H1 (cell line): ENCODE measurements at regions of chr1 and their contacts with region 1.

Region 1: DNA sequence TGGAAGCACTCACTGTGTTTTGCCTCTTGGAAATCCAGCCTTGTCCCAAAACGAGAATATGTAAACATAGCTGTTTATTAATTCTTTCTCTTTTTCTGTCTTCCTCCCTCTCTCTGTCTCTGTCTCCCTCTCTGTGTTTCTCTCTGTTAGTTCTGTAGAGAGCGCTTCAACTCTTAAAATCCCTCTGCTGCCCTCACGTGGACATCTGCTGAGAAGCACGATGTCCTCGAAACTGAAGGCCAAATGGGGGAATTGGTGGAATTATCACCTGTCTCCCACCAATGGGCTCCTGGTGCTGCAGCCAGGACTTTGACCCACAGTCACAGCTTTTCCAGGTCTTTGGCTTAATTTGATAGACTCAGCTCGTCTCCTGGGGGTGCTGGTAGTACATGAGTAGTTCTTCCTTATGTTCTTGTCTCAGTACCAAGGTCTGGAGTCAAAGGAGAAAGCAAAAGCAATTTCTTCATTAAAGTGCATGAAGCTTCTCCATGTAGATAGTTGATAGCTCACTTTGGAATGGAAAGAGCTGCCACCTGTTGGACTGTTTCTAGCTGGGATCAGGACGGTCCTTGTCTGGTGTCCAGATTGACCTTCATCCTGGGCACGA is 5.5 kb upstream of the GBP6 start:
- DNase-seq: peak; percentile 23 to 86
- H3K4me3 ChIP-seq: no peak overlapping the region
- H3K27ac ChIP-seq: no peak overlapping the region
- H3K4me1 ChIP-seq: 0 out of 7 replicates have a peak, but pooled peaks cover 0 to 2% (median 0%) of the 10 kb centered on the region in 4 experiments
- H3K27me3 ChIP-seq: no peaks in the 10 kb centered on the region
- CTCF ChIP-seq: peak; percentile 53 to 87 (median 87)
- EP300 ChIP-seq: no peak
- POLR2A ChIP-seq: no peak
- RAD21 ChIP-seq: peak; percentile 90 to 91

Region 2: GRCh38 chr1:89085781-89086180 is 272.6 kb before region 1 on chr1:
- CTCF ChIA-PET with region 1: interaction called, 13 read pairs
- POLR2A ChIA-PET with region 1: no interaction called
- DNase-seq: no peak
- H3K4me3 ChIP-seq: no peak overlapping the region
- H3K27ac ChIP-seq: no peak overlapping the region
- H3K4me1 ChIP-seq: 0 out of 7 replicates have a peak, but pooled peaks cover 0 to 3% (median 0%) of the 10 kb centered on the region in 4 experiments
- H3K27me3 ChIP-seq: no peaks in the 10 kb centered on the region
- CTCF ChIP-seq: peak in 2 of 3 experiments; percentile 60 to 65; a peak in 3 of 4 replicates
- EP300 ChIP-seq: no peak
- POLR2A ChIP-seq: no peak
- RAD21 ChIP-seq: peak; percentile 84 to 85

Region 3: GRCh38 chr1:89464008-89464407 is 105.6 kb after region 1 on chr1:
- CTCF ChIA-PET with region 1: no interaction called
- POLR2A ChIA-PET with region 1: no interaction called
- DNase-seq: no peak
- H3K4me3 ChIP-seq: no peak overlapping the region
- H3K27ac ChIP-seq: no peak overlapping the region
- H3K4me1 ChIP-seq: no peaks in the 10 kb centered on the region
- H3K27me3 ChIP-seq: no peaks in the 10 kb centered on the region
- CTCF ChIP-seq: no peak
- EP300 ChIP-seq: no peak
- POLR2A ChIP-seq: no peak
- RAD21 ChIP-seq: no peak